ENCODE measurements at regions of chr3 and their contacts with region 1.

Region 1: GRCh38 chr3:64023187-64023848 is at the start of gene PSMD6:
- DNase-seq: peak; percentile 99
- ATAC-seq: peak; percentile 97
- H3K4me3 Mint-ChIP-seq: peak within 1 kb of the TSS; percentile 88
- H3K27ac Mint-ChIP-seq: peak within 1 kb of the TSS; percentile 81
- H3K4me1 Mint-ChIP-seq: peaks cover 27% of the 10 kb centered on the region
- H3K27me3 Mint-ChIP-seq: peaks cover 6% of the 10 kb centered on the region
- CTCF ChIP-seq: peak; percentile 97
- total RNA-seq, gene PSMD6: 88.9 and 91.4 TPM in 2 replicates

Region 2: DNA sequence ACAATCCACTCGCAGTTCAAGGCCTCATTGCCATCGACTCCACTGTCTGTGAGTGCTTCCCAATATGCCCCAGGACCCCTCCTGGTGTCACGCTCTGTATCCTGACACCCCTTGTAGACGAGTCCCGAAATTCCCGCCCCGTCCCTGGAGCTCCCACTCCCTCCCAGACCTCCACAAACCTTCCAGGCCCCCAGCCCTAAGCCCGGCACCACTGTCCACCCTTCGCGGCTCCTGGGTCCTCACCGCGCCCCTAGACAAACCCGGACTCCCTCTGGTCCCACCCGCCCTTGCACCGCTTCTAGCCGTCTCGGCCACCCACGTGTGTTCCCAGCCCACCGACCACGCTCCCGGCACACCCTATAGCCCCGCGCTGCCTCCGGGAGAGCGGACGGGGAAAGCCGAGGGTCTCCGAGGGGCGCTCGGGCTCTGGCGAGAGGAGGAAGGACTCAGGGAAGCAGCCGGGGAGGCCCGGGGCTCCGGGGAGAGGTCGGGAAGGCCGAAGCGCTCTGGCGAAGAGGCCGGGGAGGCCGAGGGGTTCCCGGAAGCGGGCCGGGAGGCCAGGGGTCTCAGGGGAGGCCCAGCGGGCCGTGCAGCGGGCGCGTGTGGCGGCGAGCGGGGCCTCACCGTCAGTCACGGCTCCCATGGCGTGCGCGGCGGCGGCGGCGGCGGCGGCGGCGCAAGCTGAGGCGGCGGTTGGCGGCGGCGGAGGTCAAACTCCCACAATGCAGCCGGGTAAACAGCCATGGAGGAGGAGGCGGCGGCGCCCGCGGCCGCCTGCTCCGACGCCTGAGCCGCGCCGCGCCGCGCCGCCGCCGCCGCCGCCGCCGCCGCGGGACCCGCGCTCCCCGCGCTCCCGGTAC is 159.9 kb before region 1 on chr3 and contains the starts of genes ATXN7 and THOC7:
- CTCF ChIA-PET with region 1: no interaction called
- POLR2A ChIA-PET with region 1: interaction called, 4 read pairs
- intact Hi-C with region 1: loop called (anchors 1 kb)
- DNase-seq: peak; percentile 77
- ATAC-seq: peak; percentile 80
- H3K4me3 Mint-ChIP-seq: peak within 1 kb of the TSS; percentile 96
- H3K27ac Mint-ChIP-seq: peak within 1 kb of the TSS; percentile 94
- H3K4me1 Mint-ChIP-seq: peaks cover 50% of the 10 kb centered on the region
- H3K27me3 Mint-ChIP-seq: no peaks in the 10 kb centered on the region
- CTCF ChIP-seq: no peak
- total RNA-seq, gene ATXN7: 45.2 and 46.7 TPM in 2 replicates
- total RNA-seq, gene THOC7: 50.2 and 53.8 TPM in 2 replicates

Region 3: GRCh38 chr3:64011685-64012084 is 11.6 kb before region 1 on chr3:
- CTCF ChIA-PET with region 1: interaction called, 5 read pairs
- POLR2A ChIA-PET with region 1: interaction called, 5 read pairs
- intact Hi-C with region 1: loop called (anchors 2 kb)
- DNase-seq: no peak
- ATAC-seq: no peak
- H3K4me3 Mint-ChIP-seq: no peak overlapping the region
- H3K27ac Mint-ChIP-seq: no peak overlapping the region
- H3K4me1 Mint-ChIP-seq: peaks cover 3% of the 10 kb centered on the region
- H3K27me3 Mint-ChIP-seq: no peaks in the 10 kb centered on the region
- CTCF ChIP-seq: no peak

Region 4: GRCh38 chr3:65793495-65794199 is 1770.3 kb after region 1 on chr3:
- CTCF ChIA-PET with region 1: no interaction called
- POLR2A ChIA-PET with region 1: no interaction called
- intact Hi-C with region 1: no loop called
- DNase-seq: no peak
- ATAC-seq: no peak
- H3K4me3 Mint-ChIP-seq: no peak overlapping the region
- H3K27ac Mint-ChIP-seq: no peak overlapping the region
- H3K4me1 Mint-ChIP-seq: no peaks in the 10 kb centered on the region
- H3K27me3 Mint-ChIP-seq: no peaks in the 10 kb centered on the region
- CTCF ChIP-seq: no peak

Measured in activated B cell treated with CpG ODN at 0.5 μM for 24 hours (primary cell).